Psoas muscle (tissue), 8 donors: ENCODE measurements at regions of chr19 and their contacts with region 1.

Region 1: DNA sequence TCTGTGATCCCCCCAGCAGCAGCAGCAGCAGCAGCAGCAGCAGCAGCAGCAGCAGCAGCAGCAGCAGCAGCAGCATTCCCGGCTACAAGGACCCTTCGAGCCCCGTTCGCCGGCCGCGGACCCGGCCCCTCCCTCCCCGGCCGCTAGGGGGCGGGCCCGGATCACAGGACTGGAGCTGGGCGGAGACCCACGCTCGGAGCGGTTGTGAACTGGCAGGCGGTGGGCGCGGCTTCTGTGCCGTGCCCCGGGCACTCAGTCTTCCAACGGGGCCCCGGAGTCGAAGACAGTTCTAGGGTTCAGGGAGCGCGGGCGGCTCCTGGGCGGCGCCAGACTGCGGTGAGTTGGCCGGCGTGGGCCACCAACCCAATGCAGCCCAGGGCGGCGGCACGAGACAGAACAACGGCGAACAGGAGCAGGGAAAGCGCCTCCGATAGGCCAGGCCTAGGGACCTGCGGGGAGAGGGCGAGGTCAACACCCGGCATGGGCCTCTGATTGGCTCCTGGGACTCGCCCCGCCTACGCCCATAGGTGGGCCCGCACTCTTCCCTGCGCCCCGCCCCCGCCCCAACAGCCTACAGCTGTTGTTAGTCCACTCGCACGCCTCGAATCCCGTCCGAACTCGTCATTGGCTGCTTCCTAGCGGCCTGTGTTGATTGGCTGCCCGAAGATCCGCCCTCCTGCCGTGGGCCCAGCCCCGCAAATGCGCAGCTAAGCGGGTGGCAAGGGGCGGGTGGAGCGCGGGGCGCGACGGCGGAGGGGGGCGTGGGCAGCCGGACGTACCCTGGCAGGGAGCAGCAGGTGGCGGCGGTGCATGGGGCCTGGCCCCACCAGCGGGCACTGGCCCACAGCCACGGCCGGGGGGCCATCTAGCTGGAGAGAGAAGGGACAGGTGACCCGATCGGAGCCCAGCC is 1.4 kb upstream of the SIX5 start:
- DNase-seq: peak; percentile 98
- ATAC-seq: peak; percentile 75 to 80 (median 78)
- H3K4me3 ChIP-seq: peak overlapping the region; percentile 87
- H3K27ac ChIP-seq: peak overlapping the region; percentile 95
- H3K4me1 ChIP-seq: peaks cover 26% of the 10 kb centered on the region
- H3K27me3 ChIP-seq: no peaks in the 10 kb centered on the region
- CTCF ChIP-seq: peak; percentile 96

Region 2: DNA sequence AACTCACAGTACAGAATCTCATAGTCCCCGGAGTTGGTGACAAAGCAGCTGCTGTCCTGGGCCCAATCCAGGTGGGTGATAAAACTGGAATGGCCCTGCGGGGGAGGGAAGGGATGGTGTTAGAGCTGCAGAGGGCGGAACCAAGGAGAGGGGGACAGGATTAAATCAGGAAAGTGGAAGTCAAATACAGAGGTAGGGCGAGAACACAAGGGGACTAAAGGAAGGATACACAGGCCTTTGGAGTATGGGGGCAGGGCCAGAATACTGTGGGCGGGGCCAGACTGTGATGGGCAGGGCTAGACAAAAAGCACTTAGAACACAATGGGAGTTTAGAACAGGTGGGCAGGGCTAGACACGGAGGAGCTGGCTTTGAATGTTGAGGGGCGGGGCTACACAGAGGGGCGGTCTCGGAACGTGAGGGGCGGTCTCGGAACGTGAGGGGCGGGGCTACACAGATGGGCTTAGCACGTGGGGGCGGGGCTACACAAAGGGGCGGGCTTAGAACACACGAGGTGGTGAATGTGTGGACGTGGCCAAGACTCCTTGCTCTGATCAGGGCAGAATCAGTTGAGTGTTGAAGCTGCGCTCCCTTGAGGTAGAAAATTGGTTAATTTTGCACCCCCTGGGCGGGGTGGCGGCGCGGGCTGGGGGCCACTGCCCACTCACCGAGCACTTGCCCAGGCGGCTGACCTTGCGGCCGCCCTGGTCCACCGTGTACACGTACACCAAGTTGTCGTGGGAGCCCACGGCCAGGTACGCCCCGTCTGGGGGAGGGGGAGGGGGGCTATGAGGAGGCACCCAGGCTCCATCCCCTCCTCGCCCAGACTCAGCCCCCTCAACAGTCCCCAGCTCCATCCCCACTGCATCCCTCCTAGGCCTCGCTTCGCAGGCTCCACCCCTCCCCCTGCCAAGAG is 154.4 kb before region 1 on chr19:
- intact Hi-C with region 1: no loop called
- DNase-seq: peak; percentile 82 to 91
- ATAC-seq: peak; percentile 88 to 97 (median 94)
- H3K4me3 ChIP-seq: peak overlapping the region; percentile 34
- H3K27ac ChIP-seq: peak overlapping the region; percentile 46
- H3K4me1 ChIP-seq: peaks cover 3% of the 10 kb centered on the region
- H3K27me3 ChIP-seq: no peaks in the 10 kb centered on the region
- CTCF ChIP-seq: no peak

Region 3: DNA sequence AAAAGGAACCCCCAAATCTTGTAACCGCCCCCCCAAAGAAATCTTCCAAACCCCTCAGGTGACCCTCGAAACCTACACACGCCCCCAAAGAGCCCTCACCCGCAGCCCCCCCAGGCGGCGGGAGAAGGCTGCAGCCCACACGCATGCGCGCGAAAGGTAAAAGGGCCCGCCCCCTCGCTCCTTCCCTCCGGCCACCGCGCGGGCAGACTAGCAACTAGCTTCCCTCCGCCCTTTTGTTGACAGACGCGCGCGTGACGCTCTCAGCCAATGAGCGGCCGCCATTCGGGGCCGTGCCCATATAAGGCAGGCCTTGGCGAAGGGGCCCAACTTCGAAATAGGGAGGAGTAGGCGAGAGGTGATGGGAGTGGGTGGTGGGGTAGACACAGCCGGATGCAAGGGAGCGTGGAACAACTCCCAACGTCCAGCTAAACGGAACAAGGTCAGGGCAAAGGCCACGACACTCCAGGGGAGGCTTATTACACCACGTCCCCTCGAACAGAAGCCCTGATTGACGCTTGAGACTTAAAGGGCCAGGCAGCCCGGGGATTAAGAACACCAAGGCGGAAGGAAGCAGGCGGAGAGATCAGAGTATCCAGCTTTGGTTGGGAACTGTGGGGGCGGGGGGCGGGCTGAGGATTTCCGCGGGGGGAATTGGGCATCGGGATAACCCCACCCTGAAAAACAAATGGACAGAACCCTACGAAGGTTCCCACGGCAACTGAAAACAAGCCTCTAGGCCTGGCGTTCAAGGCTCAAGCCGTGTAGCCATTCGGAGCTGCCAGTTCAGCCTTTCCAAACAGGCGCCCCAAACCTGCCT is 53.1 kb before region 1 on chr19:
- intact Hi-C with region 1: loop called in 1 of 2 experiments (anchors 2 kb)
- DNase-seq: peak; percentile 99 to 100
- ATAC-seq: peak; percentile 96 to 98 (median 97)
- H3K4me3 ChIP-seq: peak overlapping the region; percentile 84
- H3K27ac ChIP-seq: peak overlapping the region; percentile 94
- H3K4me1 ChIP-seq: peaks cover 14% of the 10 kb centered on the region
- H3K27me3 ChIP-seq: no peaks in the 10 kb centered on the region
- CTCF ChIP-seq: no peak

Region 4: DNA sequence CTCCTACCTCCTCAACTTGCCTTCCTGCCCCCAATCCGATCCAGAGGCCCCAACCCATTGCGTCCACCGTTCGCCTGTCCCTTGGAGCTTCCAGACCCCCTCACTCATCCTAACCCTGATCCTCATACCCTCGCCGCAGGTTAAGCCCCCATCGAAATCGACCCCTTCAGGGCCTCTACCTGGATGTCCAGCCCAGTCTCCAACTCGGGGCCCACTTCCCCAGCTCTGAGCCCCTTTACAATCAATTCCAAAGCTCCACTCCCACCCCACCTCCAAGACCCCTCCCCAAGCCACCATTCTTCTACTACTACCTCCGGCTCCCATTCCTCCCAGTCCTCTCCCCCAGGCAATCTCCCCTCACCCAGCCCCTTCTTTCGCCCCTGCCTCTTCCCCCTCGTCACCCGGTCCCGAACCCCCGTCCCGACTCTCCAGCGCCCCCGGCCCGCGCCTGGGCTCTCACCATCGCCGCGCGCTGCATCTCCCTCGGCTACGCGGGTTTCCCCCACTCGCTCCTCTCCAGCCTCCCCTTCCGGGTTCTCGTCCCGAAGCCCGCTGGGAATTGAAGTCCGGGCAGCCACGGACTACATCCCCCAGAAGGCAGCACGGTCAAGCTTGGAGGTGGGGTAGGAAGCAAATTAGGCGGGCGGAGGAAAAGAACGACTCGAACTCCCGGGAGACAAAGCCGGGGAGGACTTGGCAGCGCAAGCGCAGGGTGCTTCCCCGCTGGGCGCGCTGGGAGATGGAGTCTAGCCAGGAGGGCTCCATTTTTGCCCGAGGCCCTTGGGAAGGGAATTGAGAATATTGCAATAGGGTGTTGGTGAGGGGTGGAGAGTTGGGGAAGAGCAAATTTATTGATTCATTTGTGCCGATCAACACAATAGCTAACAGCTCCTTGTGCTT is 39.8 kb before region 1 on chr19 and contains the start of gene FBXO46:
- intact Hi-C with region 1: loop called in 1 of 2 experiments (anchors 5 kb)
- DNase-seq: peak; percentile 96 to 98
- ATAC-seq: peak; percentile 97 to 98 (median 97)
- H3K4me3 ChIP-seq: peak within 1 kb of the TSS; percentile 83
- H3K27ac ChIP-seq: peak within 1 kb of the TSS; percentile 48
- H3K4me1 ChIP-seq: peaks cover 8% of the 10 kb centered on the region
- H3K27me3 ChIP-seq: no peaks in the 10 kb centered on the region
- CTCF ChIP-seq: no peak
- total RNA-seq, gene FBXO46: 6.4 to 13.0 (median 9.9) TPM

Region 5: DNA sequence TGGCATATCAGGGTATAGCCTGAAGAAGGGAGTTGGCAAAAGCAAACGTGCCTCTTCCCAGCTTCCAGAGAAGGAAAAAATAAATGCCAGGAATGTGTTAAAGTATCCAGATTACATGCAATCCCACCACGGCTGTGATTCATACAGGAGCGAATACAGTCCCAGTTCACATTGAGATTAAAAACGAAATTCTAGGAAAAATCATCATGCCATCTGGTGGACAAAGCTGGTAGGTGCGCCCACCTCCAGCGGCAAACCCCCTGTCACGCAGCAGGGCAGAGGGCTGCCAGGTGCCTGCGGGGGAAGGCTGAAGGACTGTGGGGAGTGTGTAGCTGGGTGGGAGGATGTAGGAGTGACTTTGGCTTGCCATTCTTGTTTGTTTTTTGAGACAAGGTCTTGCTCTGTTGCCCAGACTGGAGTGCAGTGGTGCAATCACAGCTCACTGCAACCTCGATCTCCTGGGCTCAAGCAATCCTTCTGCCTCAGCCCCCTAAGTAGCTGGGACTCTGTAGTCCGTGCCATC is 28.6 kb after region 1 on chr19:
- intact Hi-C with region 1: loop called (anchors 1 to 2 kb)
- DNase-seq: peak; percentile 57 to 80
- ATAC-seq: peak; percentile 70 to 87 (median 80)
- H3K4me3 ChIP-seq: no peak overlapping the region
- H3K27ac ChIP-seq: peak overlapping the region; percentile 62
- H3K4me1 ChIP-seq: peaks cover 15% of the 10 kb centered on the region
- H3K27me3 ChIP-seq: no peaks in the 10 kb centered on the region
- CTCF ChIP-seq: peak; percentile 91